Colonic mucosa (tissue), 4 donors: ENCODE measurements at regions of chr19 and their contacts with region 1.

Region 1: DNA sequence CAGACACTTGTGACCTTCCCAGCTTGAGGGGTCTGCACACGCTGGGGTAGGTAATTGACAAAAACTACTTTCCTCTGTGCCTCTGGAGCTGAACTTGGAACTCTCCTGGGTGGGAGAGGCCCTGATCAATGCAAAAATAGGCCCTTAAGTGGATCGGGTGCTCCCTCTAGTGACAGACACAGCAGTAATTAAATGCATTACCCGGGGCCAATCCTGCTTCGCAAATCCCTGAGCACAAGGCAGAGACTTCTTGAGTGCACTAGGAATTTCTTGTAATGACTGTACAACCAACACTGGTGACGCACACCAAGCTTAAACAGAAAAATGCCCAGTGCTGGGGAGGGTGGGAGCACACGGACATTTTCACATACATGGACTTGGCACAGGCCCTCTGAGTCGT is 10.6 kb upstream of the UBE2S start:
- DNase-seq: peak; percentile 73
- H3K4me3 ChIP-seq: no peak overlapping the region
- H3K27ac ChIP-seq: no peak overlapping the region
- H3K4me1 ChIP-seq: no peaks in the 10 kb centered on the region
- H3K27me3 ChIP-seq: no peaks in the 10 kb centered on the region
- CTCF ChIP-seq: peak; percentile 55

Region 2: GRCh38 chr19:55141696-55142095 is 276.5 kb before region 1 on chr19:
- intact Hi-C with region 1: loop called (anchors 5 kb)
- DNase-seq: no peak
- H3K4me3 ChIP-seq: no peak overlapping the region
- H3K27ac ChIP-seq: no peak overlapping the region
- H3K4me1 ChIP-seq: no peaks in the 10 kb centered on the region
- H3K27me3 ChIP-seq: peaks cover 20% of the 10 kb centered on the region
- CTCF ChIP-seq: no peak

Region 3: DNA sequence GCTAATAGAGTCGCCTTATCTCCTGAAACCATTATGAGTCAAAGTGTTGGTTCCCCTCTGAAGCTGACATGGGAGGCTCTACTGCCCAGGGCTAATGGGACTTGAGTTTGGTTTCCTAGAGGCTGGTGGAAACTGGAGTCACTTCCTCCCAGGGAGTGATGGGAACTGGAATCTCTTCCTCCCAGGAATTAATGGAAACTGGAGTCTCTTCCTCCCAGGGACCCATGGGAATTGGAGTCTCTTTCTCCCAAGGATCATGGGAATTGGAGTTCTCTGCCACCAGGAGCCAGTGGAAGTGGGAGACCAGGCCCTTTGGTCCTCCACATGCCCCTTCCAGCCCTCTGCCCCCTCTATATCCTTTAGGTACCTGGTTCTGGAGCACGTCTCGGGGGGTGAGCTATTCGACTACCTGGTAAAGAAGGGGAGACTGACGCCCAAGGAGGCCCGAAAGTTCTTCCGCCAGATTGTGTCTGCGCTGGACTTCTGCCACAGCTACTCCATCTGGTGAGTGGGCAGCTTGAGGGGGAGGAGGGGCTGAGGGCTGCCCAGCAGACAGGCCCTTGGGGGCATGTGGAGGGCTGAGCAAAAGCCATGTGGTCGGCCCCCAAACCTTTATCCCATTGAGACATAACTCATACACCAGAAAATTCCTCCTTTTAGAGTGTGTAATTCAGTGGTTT is 128.9 kb before region 1 on chr19:
- intact Hi-C with region 1: loop called (anchors 5 kb)
- DNase-seq: no peak
- H3K4me3 ChIP-seq: no peak overlapping the region
- H3K27ac ChIP-seq: no peak overlapping the region
- H3K4me1 ChIP-seq: no peaks in the 10 kb centered on the region
- H3K27me3 ChIP-seq: no peaks in the 10 kb centered on the region
- CTCF ChIP-seq: no peak